Breast epithelium (tissue), 4 donors: ENCODE measurements at regions of chr1 and their contacts with region 1.

Region 1: GRCh38 chr1:66416295-66416694 is 117.7 kb upstream of the SGIP1 start:
- DNase-seq: no peak
- H3K4me3 ChIP-seq: no peak overlapping the region
- H3K27ac ChIP-seq: no peak overlapping the region
- H3K4me1 ChIP-seq: no peaks in the 10 kb centered on the region
- H3K27me3 ChIP-seq: no peaks in the 10 kb centered on the region
- CTCF ChIP-seq: no peak
- POLR2A ChIP-seq: no peak

Region 2: DNA sequence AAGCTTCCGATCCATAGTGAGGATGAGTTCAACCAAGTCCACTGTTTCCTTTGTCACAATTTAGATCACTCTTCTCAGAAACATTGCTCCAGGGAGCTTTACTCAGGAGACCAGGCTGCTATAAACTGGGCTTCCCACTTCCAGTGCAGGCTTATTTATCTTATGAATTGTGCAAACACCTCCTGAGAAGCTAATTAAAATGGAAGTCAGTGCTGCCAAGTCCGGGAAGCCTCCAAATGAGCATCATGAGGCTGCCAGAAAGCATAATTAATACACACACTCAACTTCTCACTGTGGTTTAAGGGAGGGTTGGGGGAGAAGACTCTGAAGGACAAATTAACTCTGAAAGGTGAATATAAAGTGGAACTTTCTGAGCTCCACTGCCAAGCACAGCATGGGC is 27.4 kb before region 1 on chr1:
- intact Hi-C with region 1: loop called (anchors 1 kb)
- DNase-seq: no peak
- H3K4me3 ChIP-seq: no peak overlapping the region
- H3K27ac ChIP-seq: no peak overlapping the region
- H3K4me1 ChIP-seq: no peaks in the 10 kb centered on the region
- H3K27me3 ChIP-seq: no peaks in the 10 kb centered on the region
- CTCF ChIP-seq: no peak
- POLR2A ChIP-seq: no peak